RWPE1 (cell line): ENCODE measurements at regions of chr1 and their contacts with region 1.

Region 1: GRCh38 chr1:15617175-15617880 is at the start of gene DDI2:
- DNase-seq: peak; percentile 96
- H3K27ac ChIP-seq: peak within 1 kb of the TSS; percentile 96
- CTCF ChIP-seq: no peak

Region 2: GRCh38 chr1:15595809-15596617 is 21.3 kb before region 1 on chr1:
- CTCF ChIA-PET with region 1: interaction called, 10 read pairs
- POLR2A ChIA-PET with region 1: interaction called, 5 read pairs
- DNase-seq: no peak
- H3K27ac ChIP-seq: no peak overlapping the region
- CTCF ChIP-seq: no peak

Region 3: GRCh38 chr1:15603050-15603965 is 14.0 kb before region 1 on chr1:
- CTCF ChIA-PET with region 1: no interaction called
- POLR2A ChIA-PET with region 1: interaction called, 14 read pairs
- DNase-seq: peak; percentile 98
- H3K27ac ChIP-seq: peak overlapping the region; percentile 95
- CTCF ChIP-seq: no peak